Heart right ventricle (tissue), 16 donors: ENCODE measurements at regions of chr5 and their contacts with region 1.

Region 1: DNA sequence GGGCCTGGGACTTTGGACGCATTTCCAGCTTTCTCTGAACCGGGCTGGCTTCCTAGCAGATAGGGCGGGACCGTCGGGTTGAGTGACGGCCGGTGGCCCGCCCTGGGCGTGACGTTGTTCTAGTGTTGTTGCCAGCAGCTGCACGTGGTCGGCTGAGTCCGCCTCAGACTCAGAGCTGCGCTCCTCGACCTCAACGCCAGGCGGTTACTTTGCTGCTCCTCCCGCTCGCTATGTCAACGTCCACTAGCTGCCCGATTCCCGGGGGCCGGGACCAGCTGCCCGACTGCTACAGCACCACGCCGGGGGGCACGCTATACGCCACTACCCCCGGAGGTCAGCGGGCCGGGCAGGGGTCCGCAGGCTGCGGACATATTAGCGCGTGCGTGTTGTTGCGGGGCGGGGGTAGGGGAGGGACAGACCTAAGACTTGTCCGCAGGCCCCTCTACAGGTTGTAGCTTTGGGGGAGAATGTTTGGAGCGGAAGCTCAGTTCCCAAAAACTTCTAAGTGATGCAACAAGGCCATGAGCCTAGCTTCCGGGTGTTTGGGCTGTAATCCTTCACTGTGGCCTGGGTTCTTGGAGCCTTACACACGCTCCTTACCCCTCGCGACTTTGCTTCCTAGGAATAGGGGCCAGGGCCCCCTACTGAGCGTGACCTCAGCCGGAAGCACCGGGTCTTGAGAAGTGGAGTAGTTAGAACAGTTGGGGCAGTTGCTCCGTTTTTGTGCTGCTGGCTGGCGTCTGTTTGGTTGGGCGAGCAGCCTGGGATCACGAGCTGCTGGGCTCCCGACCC is at the start of gene EIF4EBP3:
- DNase-seq: peak; percentile 98
- ATAC-seq: peak; percentile 93 to 96 (median 96)
- H3K4me3 ChIP-seq: peak within 1 kb of the TSS in 9 of 10 donors; percentile 35 to 64 (median 57)
- H3K27ac ChIP-seq: peak within 1 kb of the TSS; percentile 77 to 97 (median 94)
- H3K4me1 ChIP-seq: peaks cover 27 to 53% (median 46%) of the 10 kb centered on the region in 9 donors
- H3K27me3 ChIP-seq: no peaks in the 10 kb centered on the region
- CTCF ChIP-seq: peak; percentile 46 to 78 (median 60)
- total RNA-seq, gene EIF4EBP3: 9.2 to 36.5 (median 21.5) TPM

Region 2: GRCh38 chr5:140413230-140413629 is 134.5 kb before region 1 on chr5:
- intact Hi-C with region 1: no loop called
- DNase-seq: no peak
- ATAC-seq: no peak
- H3K4me3 ChIP-seq: no peak overlapping the region
- H3K27ac ChIP-seq: no peak overlapping the region
- H3K4me1 ChIP-seq: peaks cover 0 to 50% (median 21%) of the 10 kb centered on the region in 9 donors
- H3K27me3 ChIP-seq: no peaks in the 10 kb centered on the region
- CTCF ChIP-seq: no peak

Region 3: DNA sequence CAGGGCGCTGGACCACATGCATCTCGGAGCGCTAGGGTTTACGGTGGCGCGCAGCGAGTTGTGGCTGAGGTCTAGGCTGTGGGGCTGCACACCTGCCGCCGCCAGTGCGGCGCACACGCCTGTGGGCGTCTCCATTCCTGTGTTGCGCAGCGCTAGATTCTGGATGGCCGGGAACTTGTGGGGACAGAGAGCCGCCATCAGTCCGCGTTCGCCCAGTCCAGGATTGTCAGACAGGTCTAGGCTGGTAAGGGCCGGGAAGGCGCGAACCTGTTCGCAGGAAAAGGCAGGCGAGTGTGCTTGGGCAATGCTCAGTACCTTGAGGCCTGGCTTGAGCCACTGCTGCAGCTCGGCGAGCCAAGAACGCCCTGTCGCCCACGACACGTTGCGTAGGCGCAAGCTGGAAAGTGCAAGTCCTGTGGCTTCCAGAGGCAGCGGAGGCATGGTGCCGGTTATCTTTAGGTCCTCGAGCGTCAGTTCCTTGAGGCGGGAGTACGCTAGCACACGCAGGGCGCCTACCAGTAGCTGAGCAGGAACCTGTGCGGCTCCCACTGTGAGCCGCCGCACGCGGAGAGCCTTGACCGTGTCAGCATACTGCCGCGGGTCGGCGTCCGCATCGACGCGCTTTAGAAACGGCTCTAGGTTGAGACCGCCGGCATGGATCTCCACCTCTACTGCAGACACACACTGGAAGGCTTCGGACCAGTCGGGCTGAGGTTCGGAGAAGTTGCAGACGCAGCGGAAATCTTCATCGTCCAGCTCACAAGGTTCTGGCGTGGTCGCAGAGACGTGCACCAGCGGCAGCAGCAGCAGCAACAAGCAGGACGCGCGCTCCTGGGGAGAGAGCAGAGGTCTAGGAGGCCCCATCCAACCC is 84.7 kb after region 1 on chr5:
- intact Hi-C with region 1: loop called in 5 of 10 experiments (anchors 5 kb)
- DNase-seq: peak; percentile 50 to 56
- ATAC-seq: peak; percentile 62 to 85 (median 77)
- H3K4me3 ChIP-seq: peak overlapping the region; percentile 10 to 69 (median 62)
- H3K27ac ChIP-seq: peak overlapping the region in 9 of 10 donors; percentile 14 to 92 (median 74)
- H3K4me1 ChIP-seq: peaks cover 0 to 39% (median 19%) of the 10 kb centered on the region in 9 donors
- H3K27me3 ChIP-seq: no peaks in the 10 kb centered on the region
- CTCF ChIP-seq: no peak

Region 4: DNA sequence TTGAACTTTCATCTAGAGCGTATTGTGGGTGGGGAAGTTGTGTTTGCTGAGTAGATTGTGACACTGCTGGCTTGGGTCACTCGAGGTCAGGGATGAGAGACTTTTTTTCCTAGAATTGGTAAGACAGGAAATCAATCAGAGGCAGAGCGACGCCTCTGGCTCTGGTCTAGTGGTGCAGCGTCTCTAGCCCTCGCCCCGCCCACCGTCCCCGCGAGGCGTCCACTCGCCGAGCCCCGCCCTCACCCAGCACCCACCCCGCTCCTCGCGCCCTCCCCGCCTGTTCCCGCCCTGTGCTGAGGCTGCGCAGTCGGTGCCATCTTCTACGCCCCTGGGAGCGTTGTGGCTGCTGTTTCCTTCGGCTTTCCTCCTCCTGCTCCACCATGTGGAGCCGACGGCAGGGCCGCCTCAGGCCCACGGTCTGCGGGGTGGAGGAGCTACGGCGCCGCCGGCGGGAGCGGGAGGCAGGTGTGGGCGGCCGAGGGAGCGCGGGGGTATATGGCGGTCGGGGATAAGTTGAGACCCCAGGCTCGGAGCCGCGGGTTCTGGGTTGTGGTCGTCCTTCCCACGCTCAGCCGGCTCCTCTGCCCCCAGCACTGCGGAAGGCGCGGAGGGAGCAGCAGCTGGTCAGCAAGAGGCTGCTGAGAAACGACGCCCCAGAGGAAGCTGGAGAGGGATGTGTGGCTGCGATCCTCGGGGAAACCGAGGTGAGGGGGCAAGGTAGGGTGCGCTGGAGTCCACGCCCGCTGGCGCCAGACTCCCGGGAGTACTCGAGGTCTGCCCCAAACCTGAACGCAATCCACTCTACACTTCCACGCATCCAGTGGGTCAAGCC is 91.7 kb after region 1 on chr5 and contains the start of gene TMCO6:
- intact Hi-C with region 1: loop called in 7 of 10 experiments (anchors 2 to 10 kb)
- DNase-seq: peak; percentile 98 to 99
- ATAC-seq: peak; percentile 98 to 99 (median 99)
- H3K4me3 ChIP-seq: peak within 1 kb of the TSS; percentile 53 to 90 (median 70)
- H3K27ac ChIP-seq: peak within 1 kb of the TSS; percentile 64 to 97 (median 88)
- H3K4me1 ChIP-seq: peaks cover 0 to 44% (median 16%) of the 10 kb centered on the region in 9 donors
- H3K27me3 ChIP-seq: no peaks in the 10 kb centered on the region
- CTCF ChIP-seq: peak; percentile 41 to 89 (median 75)
- total RNA-seq, gene TMCO6: 1.6 to 5.2 (median 3.2) TPM

Region 5: GRCh38 chr5:140647042-140647341 is 99.3 kb after region 1 on chr5:
- intact Hi-C with region 1: loop called in 2 of 10 experiments (anchors 5 to 10 kb)
- DNase-seq: no peak
- ATAC-seq: peak in 2 of 8 donors; percentile 3 to 5
- H3K4me3 ChIP-seq: peak overlapping the region; percentile 53 to 99 (median 90)
- H3K27ac ChIP-seq: peak overlapping the region; percentile 54 to 92 (median 86)
- H3K4me1 ChIP-seq: peaks cover 4 to 46% (median 26%) of the 10 kb centered on the region in 9 donors
- H3K27me3 ChIP-seq: no peaks in the 10 kb centered on the region
- CTCF ChIP-seq: no peak